ENCODE measurements at regions of chr3 and their contacts with region 1.

Region 1: GRCh38 chr3:141959921-141960554 is 83.6 kb downstream of the ATP1B3 start:
- DNase-seq: no peak
- ATAC-seq: no peak
- H3K4me3 ChIP-seq: no peak overlapping the region
- H3K4me3 Mint-ChIP-seq: no peak overlapping the region
- H3K27ac ChIP-seq: no peak overlapping the region
- H3K27ac Mint-ChIP-seq: no peak overlapping the region
- H3K4me1 ChIP-seq: no peaks in the 10 kb centered on the region
- H3K4me1 Mint-ChIP-seq: peaks cover 0 to 5% (median 3%) of the 10 kb centered on the region in 7 donors
- H3K27me3 ChIP-seq: no peaks in the 10 kb centered on the region
- H3K27me3 Mint-ChIP-seq: no peaks in the 10 kb centered on the region

Region 2: DNA sequence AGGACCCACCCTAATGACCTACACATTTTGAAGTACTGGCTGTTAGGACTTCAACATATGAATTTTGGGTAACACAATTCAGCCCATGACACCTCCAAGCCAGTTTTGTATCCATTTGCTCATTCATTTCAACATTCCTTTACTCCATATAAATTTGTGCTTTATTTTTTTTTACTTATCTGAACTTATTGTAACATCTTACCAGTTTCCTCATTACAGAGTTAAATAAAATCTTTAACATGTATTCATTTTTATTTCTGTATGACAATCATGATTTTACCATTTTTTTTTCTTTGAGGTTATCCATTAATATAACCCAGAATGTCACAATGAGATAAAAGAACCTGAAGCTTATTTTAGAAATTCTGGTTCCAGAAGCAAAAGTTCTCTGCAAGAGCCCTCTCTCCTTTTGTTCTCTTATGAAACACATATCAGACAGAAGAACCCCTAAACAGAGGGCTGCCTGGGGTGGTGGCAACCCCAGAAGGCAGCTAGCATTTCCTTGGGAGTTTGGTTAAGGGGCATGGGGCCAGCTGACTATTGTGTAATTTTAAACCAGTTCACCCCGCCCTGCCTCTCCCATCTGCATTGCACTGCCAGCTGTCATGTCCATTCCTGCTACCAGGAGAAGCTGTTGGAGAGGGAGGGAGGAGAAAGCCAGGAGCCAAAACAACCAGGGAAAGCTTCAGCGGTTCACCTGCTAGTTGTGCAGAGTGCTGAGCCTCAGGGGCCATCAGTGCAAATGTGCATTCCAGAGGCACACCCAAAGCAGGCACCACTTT is 131.4 kb before region 1 on chr3:
- CTCF ChIA-PET with region 1: no interaction called
- POLR2A ChIA-PET with region 1: no interaction called
- intact Hi-C with region 1: no loop called
- DNase-seq: no peak
- ATAC-seq: no peak
- H3K4me3 ChIP-seq: no peak overlapping the region
- H3K4me3 Mint-ChIP-seq: no peak overlapping the region
- H3K27ac ChIP-seq: no peak overlapping the region
- H3K27ac Mint-ChIP-seq: no peak overlapping the region
- H3K4me1 ChIP-seq: no peaks in the 10 kb centered on the region
- H3K4me1 Mint-ChIP-seq: peaks cover 0 to 8% (median 0%) of the 10 kb centered on the region in 7 donors
- H3K27me3 ChIP-seq: no peaks in the 10 kb centered on the region
- H3K27me3 Mint-ChIP-seq: peaks cover 0 to 6% (median 0%) of the 10 kb centered on the region in 5 donors

Region 3: DNA sequence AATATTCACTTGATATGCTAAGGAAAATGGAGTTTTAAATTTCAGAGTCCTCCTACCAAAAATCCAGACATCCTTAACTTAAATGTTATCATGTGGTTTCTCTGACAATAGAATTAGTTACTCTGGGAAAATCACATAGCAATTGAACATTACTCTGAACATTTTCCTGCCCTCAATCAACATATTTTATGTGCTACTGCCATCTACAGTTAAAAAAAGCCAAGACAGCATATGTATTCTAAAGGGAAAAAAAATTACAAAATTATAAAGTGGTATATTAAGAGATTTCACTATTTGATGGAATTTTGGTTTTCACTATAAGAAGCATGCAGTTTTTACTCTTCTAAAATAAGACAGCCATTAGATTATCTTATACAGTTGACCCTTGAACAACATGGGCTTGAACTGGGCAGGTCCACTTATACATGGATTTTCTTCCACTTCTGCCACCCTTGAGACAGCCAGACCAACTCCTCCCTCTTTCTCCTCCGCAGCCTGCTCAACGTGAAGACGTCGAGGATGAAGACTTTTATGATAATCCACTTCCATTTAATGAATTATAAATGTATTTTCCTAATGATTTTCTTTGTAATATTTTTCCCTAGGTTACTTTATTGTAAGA is 38.7 kb after region 1 on chr3:
- CTCF ChIA-PET with region 1: no interaction called
- POLR2A ChIA-PET with region 1: no interaction called
- intact Hi-C with region 1: loop called in 1 of 2 experiments (anchors 5 kb)
- DNase-seq: peak in 3 of 9 donors; percentile 2 to 19 (median 10)
- ATAC-seq: no peak
- H3K4me3 ChIP-seq: no peak overlapping the region
- H3K4me3 Mint-ChIP-seq: no peak overlapping the region
- H3K27ac ChIP-seq: no peak overlapping the region
- H3K27ac Mint-ChIP-seq: no peak overlapping the region
- H3K4me1 ChIP-seq: no peaks in the 10 kb centered on the region
- H3K4me1 Mint-ChIP-seq: peaks cover 0 to 2% (median 0%) of the 10 kb centered on the region in 7 donors
- H3K27me3 ChIP-seq: no peaks in the 10 kb centered on the region
- H3K27me3 Mint-ChIP-seq: no peaks in the 10 kb centered on the region

Region 4: DNA sequence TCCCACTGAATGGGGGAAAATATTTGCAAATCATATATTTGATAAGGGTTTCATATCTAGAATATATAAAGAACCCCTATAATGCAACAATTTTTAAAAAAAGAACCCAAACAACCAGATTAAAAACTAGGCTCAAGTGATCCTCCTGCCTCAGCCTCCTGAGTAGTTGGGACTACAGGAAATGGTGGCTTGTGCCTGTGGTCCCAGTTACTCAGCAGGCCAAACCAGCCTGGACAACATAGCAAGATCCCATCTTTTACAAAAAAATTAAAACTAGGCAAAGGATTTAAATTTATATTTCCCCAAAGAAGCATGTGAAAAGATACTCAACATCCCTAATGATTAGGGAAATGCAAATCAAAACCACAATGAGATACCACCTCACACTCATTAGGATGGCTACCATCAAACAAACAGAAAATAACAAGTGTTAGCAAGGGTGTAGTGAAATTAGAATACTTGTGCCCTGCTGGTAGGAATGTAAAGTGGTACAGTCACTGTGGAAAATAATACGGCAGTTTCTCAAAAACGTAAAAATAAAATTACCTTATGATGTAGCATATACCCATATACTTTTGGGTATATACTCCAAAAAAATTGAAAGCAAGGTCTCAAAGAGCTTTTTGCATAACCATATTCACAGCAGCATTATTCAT is 169.6 kb after region 1 on chr3:
- CTCF ChIA-PET with region 1: no interaction called
- POLR2A ChIA-PET with region 1: no interaction called
- intact Hi-C with region 1: loop called in 1 of 2 experiments (anchors 10 kb)
- DNase-seq: no peak
- ATAC-seq: no peak
- H3K4me3 ChIP-seq: no peak overlapping the region
- H3K4me3 Mint-ChIP-seq: no peak overlapping the region
- H3K27ac ChIP-seq: no peak overlapping the region
- H3K27ac Mint-ChIP-seq: peak overlapping the region in 2 of 9 donors; percentile 31 to 55
- H3K4me1 ChIP-seq: no peaks in the 10 kb centered on the region
- H3K4me1 Mint-ChIP-seq: peaks cover 3 to 28% (median 10%) of the 10 kb centered on the region in 7 donors
- H3K27me3 ChIP-seq: no peaks in the 10 kb centered on the region
- H3K27me3 Mint-ChIP-seq: no peaks in the 10 kb centered on the region

Region 5: GRCh38 chr3:142875583-142876207 is 915.7 kb after region 1 on chr3:
- CTCF ChIA-PET with region 1: no interaction called
- POLR2A ChIA-PET with region 1: no interaction called
- intact Hi-C with region 1: no loop called
- DNase-seq: no peak
- ATAC-seq: no peak
- H3K4me3 ChIP-seq: no peak overlapping the region
- H3K4me3 Mint-ChIP-seq: no peak overlapping the region
- H3K27ac ChIP-seq: no peak overlapping the region
- H3K27ac Mint-ChIP-seq: no peak overlapping the region
- H3K4me1 ChIP-seq: no peaks in the 10 kb centered on the region
- H3K4me1 Mint-ChIP-seq: peaks cover 0 to 5% (median 0%) of the 10 kb centered on the region in 7 donors
- H3K27me3 ChIP-seq: no peaks in the 10 kb centered on the region
- H3K27me3 Mint-ChIP-seq: peaks cover 6 to 29% (median 11%) of the 10 kb centered on the region in 5 donors

Measured in naive thymus-derived CD4-positive, alpha-beta T cell (primary cell).